Common myeloid progenitor, CD34-positive (primary cell): ENCODE measurements at regions of chr1 and their contacts with region 1.

Region 1: DNA sequence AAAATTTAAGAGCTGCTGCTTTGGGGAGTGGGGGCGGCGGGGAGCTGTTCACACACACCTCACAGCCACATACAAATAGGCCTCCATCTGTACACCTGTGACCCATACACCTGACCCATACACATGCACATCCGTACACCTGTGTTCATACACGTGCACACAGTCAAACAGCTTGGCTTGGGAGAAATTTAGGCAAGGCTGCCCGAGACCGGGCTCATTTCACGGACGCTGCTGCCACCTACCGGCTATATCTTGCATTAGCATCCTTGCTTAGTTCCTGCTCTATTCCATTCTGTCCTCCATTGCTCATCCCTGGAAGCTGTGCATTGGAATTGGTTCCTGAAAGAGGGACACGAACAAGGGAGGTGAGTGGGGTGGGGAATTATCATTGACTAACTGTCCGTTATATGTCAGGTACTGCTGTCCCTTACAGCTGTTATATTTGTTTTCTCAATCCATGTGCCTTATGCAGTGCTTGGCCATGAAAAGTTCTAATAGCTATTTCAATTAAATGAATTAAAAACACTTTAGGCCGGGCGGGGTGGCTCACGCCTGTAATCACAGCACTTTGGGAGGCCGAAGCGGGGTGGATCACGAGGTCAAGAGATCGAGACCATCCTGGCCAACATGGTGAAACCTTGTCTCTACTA is 37.1 kb upstream of the EPB41 start:
- DNase-seq: peak; percentile 65 to 78 (median 73)
- H3K4me3 ChIP-seq: no peak overlapping the region
- H3K27ac ChIP-seq: no peak overlapping the region
- H3K4me1 ChIP-seq: peaks cover 0 to 9% (median 1%) of the 10 kb centered on the region in 4 experiments
- H3K27me3 ChIP-seq: no peaks in the 10 kb centered on the region

Region 2: DNA sequence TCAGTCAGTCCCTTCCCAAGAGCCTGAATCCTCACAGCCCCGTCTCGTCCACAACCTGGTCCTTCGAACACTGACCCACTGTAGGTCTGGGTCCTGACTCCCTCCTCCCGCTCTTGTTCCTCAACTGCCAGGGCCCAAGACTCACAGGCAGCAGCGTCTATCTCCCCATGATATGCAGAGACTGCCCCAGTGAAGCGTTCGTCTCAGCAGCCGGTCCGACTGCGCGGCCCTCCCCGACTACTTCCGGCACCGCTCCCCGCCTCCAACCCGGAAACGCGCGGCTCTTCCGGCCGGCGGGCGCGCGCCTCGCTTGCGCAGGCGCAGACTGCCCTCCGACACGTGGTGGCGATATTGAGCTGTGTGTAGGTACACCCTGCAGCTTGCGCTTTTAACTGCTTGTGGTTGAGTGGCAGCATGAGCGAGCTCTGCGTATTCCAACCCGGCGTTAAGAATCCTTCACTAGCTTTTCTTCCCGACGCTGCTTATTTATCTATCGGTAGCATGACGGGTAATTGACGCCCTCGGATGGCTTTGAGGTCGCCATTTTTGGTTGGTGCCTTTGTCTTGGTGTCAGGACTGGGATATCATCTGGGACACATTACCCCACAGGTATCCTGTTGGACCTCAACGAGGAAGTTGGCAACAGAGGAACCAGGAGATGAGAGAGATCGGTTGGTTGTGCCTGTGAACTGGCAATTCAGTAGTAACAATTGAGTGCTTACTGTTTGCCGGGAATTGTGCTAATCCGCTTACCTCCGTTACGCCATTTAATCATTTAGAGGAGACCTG is 234.2 kb before region 1 on chr1 and contains the start of gene TAF12:
- CTCF ChIA-PET with region 1: interaction called, 13 read pairs
- POLR2A ChIA-PET with region 1: interaction called, 8 read pairs
- DNase-seq: peak; percentile 97 to 98 (median 98)
- H3K4me3 ChIP-seq: peak within 1 kb of the TSS; percentile 77 to 100 (median 95)
- H3K27ac ChIP-seq: peak within 1 kb of the TSS; percentile 88 to 93
- H3K4me1 ChIP-seq: peaks cover 10 to 43% (median 29%) of the 10 kb centered on the region in 4 experiments
- H3K27me3 ChIP-seq: no peaks in the 10 kb centered on the region

Region 3: GRCh38 chr1:28775121-28775944 is 101.9 kb before region 1 on chr1:
- CTCF ChIA-PET with region 1: interaction called, 14 read pairs
- POLR2A ChIA-PET with region 1: interaction called, 5 read pairs
- DNase-seq: peak; percentile 73 to 90 (median 89)
- H3K4me3 ChIP-seq: peak overlapping the region; percentile 21 to 72 (median 62)
- H3K27ac ChIP-seq: no peak overlapping the region
- H3K4me1 ChIP-seq: peaks cover 0 to 14% (median 10%) of the 10 kb centered on the region in 4 experiments
- H3K27me3 ChIP-seq: no peaks in the 10 kb centered on the region

Region 4: GRCh38 chr1:28782011-28782410 is 95.2 kb before region 1 on chr1:
- CTCF ChIA-PET with region 1: interaction called, 114 read pairs
- POLR2A ChIA-PET with region 1: interaction called, 4 read pairs
- DNase-seq: no peak
- H3K4me3 ChIP-seq: no peak overlapping the region
- H3K27ac ChIP-seq: no peak overlapping the region
- H3K4me1 ChIP-seq: peaks cover 0 to 13% (median 0%) of the 10 kb centered on the region in 4 experiments
- H3K27me3 ChIP-seq: no peaks in the 10 kb centered on the region

Region 5: DNA sequence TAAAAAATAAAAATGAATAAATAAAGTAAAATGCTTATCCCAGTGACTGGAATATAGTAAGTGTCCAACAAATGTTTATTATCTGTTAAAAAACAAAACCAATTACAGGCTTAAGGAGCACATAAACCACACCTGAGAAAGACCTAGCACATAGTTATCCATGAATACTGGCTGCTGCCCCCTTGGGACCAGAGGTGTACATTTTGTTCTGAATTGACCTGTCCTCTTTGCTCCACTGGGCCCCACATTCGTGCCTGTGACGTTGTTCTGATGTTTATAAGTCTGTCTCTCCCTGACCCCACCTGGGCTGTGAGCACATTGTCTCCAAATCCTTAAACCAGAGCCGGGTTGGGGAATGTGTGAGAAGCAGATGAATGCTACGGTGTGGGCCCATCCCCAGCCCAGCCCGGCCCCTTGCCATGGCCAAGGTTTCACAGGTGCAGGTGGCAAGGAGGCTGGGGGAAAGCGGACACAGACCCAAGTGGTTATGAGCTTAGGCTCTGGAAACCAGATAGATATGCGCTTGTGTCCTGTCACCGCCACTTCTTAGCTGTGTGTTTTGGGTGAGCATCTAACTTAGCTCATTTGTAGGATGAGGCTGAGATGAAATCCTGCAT is 36.2 kb before region 1 on chr1:
- CTCF ChIA-PET with region 1: no interaction called
- POLR2A ChIA-PET with region 1: no interaction called
- DNase-seq: no peak
- H3K4me3 ChIP-seq: no peak overlapping the region
- H3K27ac ChIP-seq: no peak overlapping the region
- H3K4me1 ChIP-seq: peaks cover 0 to 4% (median 2%) of the 10 kb centered on the region in 4 experiments
- H3K27me3 ChIP-seq: peaks cover 0 to 4% (median 0%) of the 10 kb centered on the region in 5 experiments

Region 6: DNA sequence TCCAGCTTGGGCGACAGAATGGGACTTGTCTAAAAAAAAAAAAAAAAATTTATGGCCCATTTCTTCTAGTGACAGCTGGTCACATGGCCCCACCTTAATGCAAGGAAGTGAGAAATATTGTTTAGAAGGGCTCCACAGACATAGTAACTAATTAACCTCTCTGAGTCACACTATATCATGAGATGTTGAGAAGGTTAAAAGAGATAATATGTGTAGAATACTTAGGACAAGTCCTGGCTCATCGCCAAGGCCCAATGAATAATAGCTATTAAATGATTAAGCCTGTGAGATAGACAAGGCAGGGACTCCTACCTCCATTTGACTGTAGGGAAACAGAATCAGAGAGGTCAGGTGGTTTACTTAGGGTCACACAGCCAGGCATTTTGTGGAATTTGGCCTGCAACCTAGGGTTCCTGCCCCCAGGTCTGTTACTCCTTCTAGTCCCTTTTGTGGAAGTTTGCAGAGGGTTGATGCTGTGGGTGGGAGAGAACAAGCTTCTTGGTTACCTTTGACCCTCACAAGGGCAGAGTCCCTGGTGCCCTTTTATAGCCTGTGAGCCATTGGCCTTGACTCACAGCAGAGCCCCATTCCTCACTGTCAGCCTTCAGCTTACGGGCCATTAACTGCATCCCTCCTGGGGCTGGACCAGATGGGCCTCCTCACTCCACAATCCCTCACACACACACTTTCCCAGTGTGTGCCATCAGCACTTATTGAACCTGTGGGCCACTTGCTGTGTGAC is 16.8 kb before region 1 on chr1:
- CTCF ChIA-PET with region 1: interaction called, 11 read pairs
- POLR2A ChIA-PET with region 1: no interaction called
- DNase-seq: peak in 2 of 3 donors; percentile 19 to 25
- H3K4me3 ChIP-seq: no peak overlapping the region
- H3K27ac ChIP-seq: no peak overlapping the region
- H3K4me1 ChIP-seq: peaks cover 0 to 4% (median 0%) of the 10 kb centered on the region in 4 experiments
- H3K27me3 ChIP-seq: peaks cover 0 to 5% (median 3%) of the 10 kb centered on the region in 5 experiments

Region 7: GRCh38 chr1:28950449-28950848 is 73.2 kb after region 1 on chr1:
- CTCF ChIA-PET with region 1: no interaction called
- POLR2A ChIA-PET with region 1: no interaction called
- DNase-seq: no peak
- H3K4me3 ChIP-seq: no peak overlapping the region
- H3K27ac ChIP-seq: no peak overlapping the region
- H3K4me1 ChIP-seq: no peaks in the 10 kb centered on the region
- H3K27me3 ChIP-seq: no peaks in the 10 kb centered on the region

Region 8: GRCh38 chr1:29043274-29043965 is 166.2 kb after region 1 on chr1:
- CTCF ChIA-PET with region 1: interaction called, 18 read pairs
- POLR2A ChIA-PET with region 1: no interaction called
- DNase-seq: no peak
- H3K4me3 ChIP-seq: no peak overlapping the region
- H3K27ac ChIP-seq: no peak overlapping the region
- H3K4me1 ChIP-seq: no peaks in the 10 kb centered on the region
- H3K27me3 ChIP-seq: no peaks in the 10 kb centered on the region

Region 9: DNA sequence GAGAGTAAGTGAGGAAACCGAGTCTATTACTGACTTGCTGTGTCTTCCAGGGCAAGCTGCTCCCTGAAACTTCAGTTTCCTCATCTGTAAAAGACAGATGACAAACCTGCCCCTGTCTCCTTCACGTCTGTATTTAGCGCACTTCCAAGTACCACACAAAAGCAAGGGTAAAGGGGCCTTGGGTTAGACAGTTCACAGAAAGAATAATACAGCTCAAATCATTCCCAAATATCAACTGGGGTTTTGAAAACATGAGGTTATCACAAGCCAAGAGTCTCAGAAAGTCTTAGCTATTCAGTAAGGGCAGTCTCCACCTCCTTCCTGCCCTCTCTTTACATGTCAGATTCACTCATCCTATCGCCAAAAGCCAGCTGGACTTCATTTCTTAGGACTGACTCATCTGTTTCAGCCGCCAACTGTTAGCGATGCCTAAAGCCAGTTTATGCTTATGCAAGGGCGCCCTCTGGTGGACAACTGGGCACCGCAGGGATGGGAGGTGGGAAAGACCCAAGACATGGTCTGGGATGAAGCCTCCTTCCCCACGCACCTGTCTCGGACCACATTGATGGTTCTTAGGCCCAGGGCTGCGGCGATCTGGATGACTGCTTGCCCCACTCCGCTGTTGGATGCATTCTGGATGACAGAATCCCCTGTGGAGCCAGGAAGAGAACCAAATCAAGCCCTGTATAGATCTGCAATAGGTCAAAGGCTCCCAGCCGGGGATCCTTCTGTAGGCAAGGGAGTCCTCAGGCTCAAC is 325.5 kb after region 1 on chr1:
- CTCF ChIA-PET with region 1: interaction called, 14 read pairs
- POLR2A ChIA-PET with region 1: no interaction called
- DNase-seq: peak; percentile 88 to 94 (median 93)
- H3K4me3 ChIP-seq: no peak overlapping the region
- H3K27ac ChIP-seq: peak overlapping the region in 1 of 2 experiments; percentile 16
- H3K4me1 ChIP-seq: peaks cover 5 to 19% (median 13%) of the 10 kb centered on the region in 4 experiments
- H3K27me3 ChIP-seq: no peaks in the 10 kb centered on the region